ENCODE measurements at regions of chr2 and their contacts with region 1.

Region 1: GRCh38 chr2:197499594-197500526 is at the starts of genes HSPD1 and HSPE1:
- DNase-seq: peak; percentile 99
- H3K4me3 ChIP-seq: peak within 1 kb of the TSS; percentile 68 to 93 (median 86)
- H3K27ac ChIP-seq: peak within 1 kb of the TSS; percentile 75
- H3K4me1 ChIP-seq: peaks cover 46% of the 10 kb centered on the region
- H3K27me3 ChIP-seq: no peaks in the 10 kb centered on the region
- CTCF ChIP-seq: no peak
- POLR2A ChIP-seq: peak; percentile 82
- total RNA-seq, gene HSPD1: 307 and 337 TPM in 2 replicates
- total RNA-seq, gene HSPE1: 137 and 145 TPM in 2 replicates

Region 2: DNA sequence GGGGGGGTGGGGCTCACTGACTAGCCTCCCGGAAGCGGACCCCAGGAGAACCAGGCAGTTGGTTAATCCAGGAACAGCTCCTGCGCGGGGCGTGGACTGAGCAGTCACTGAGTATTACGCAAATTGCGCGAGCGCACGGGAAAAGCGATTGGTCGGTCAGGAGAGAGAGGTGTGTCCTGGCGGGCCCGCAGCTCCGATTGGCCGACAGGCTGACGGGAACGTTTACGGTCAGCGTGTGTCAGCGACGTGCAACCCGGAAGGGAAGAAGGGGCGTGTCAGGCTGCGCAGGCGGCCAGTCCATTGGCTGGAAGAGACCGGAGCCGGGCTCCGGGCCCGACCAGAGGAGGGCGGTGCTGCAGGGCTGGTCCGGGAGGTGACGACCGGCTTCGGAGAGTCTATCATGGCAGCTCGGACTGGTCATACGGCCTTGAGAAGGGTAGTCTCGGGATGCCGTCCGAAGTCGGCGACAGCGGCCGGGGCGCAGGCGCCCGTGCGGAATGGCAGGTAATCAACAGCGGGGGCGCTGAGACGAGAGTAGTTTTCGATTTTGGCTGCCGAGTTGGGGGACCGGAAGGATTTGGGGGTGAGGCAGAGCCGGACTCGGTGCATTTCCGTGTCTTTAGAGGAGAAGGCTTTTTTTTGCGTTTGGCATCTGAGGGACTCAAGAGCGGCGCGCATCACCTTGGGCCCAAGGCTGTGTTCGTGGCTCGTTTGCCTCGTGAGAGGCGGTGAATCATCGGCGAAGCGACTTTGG is 46.5 kb before region 1 on chr2 and contains the start of gene COQ10B:
- CTCF ChIA-PET with region 1: interaction called, 3 read pairs
- POLR2A ChIA-PET with region 1: interaction called, 16 read pairs
- dilution Hi-C with region 1: no loop called
- intact Hi-C with region 1: loop called (anchors 1 kb)
- DNase-seq: peak; percentile 100
- H3K4me3 ChIP-seq: peak within 1 kb of the TSS; percentile 61 to 95 (median 75)
- H3K27ac ChIP-seq: peak within 1 kb of the TSS; percentile 98
- H3K4me1 ChIP-seq: peaks cover 14% of the 10 kb centered on the region
- H3K27me3 ChIP-seq: no peaks in the 10 kb centered on the region
- CTCF ChIP-seq: peak in 1 of 2 donors; percentile 30
- POLR2A ChIP-seq: peak; percentile 94
- total RNA-seq, gene COQ10B: 15.1 and 19.5 TPM in 2 replicates

Region 3: DNA sequence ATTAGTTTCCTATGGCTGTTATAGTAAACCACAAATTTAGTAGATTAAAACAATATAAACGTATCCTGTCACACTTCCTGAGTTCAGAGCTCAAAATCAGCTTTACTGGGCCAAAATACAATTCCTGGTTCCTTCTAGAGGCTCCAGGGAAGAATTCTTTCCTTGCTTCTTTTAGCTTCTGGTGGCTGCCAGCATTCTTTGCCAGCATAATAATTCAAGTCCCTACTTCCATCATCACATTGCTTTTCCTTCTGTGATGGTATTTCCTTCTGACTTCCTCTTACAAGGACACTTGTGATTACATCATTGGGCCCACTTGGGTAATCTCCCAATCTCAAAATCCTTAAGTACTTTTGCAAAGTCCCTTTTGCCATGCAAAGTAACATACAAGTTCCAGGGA is 56.6 kb after region 1 on chr2:
- CTCF ChIA-PET with region 1: no interaction called
- POLR2A ChIA-PET with region 1: interaction called, 3 read pairs
- dilution Hi-C with region 1: no loop called
- intact Hi-C with region 1: loop called (anchors 5 kb)
- DNase-seq: peak; percentile 82
- H3K4me3 ChIP-seq: no peak overlapping the region
- H3K27ac ChIP-seq: peak overlapping the region; percentile 7
- H3K4me1 ChIP-seq: peaks cover 16% of the 10 kb centered on the region
- H3K27me3 ChIP-seq: no peaks in the 10 kb centered on the region
- CTCF ChIP-seq: no peak
- POLR2A ChIP-seq: no peak

Region 4: GRCh38 chr2:197675711-197676188 is 175.9 kb after region 1 on chr2:
- CTCF ChIA-PET with region 1: interaction called, 3 read pairs
- POLR2A ChIA-PET with region 1: interaction called, 4 read pairs
- dilution Hi-C with region 1: no loop called
- intact Hi-C with region 1: loop called (anchors 1 kb)
- DNase-seq: peak; percentile 88
- H3K4me3 ChIP-seq: peak overlapping the region; percentile 57 to 99 (median 98)
- H3K27ac ChIP-seq: peak overlapping the region; percentile 78
- H3K4me1 ChIP-seq: peaks cover 28% of the 10 kb centered on the region
- H3K27me3 ChIP-seq: no peaks in the 10 kb centered on the region
- CTCF ChIP-seq: no peak
- POLR2A ChIP-seq: peak; percentile 35

Measured in endothelial cell of umbilical vein (primary cell).